Sigmoid colon (tissue), 7 donors: ENCODE measurements at regions of chr19 and their contacts with region 1.

Region 1: GRCh38 chr19:41449079-41449864 is 6.3 kb downstream of the ERICH4 start:
- DNase-seq: peak; percentile 86
- H3K4me3 ChIP-seq: peak overlapping the region in 3 of 4 donors; percentile 5 to 33 (median 22)
- H3K27ac ChIP-seq: no peak overlapping the region
- H3K4me1 ChIP-seq: peaks cover 0 to 6% (median 0%) of the 10 kb centered on the region in 4 donors
- H3K27me3 ChIP-seq: peaks cover 0 to 19% (median 0%) of the 10 kb centered on the region in 3 donors
- CTCF ChIP-seq: peak; percentile 79 to 97 (median 92)
- EP300 ChIP-seq: no peak
- POLR2A ChIP-seq: no peak

Region 2: DNA sequence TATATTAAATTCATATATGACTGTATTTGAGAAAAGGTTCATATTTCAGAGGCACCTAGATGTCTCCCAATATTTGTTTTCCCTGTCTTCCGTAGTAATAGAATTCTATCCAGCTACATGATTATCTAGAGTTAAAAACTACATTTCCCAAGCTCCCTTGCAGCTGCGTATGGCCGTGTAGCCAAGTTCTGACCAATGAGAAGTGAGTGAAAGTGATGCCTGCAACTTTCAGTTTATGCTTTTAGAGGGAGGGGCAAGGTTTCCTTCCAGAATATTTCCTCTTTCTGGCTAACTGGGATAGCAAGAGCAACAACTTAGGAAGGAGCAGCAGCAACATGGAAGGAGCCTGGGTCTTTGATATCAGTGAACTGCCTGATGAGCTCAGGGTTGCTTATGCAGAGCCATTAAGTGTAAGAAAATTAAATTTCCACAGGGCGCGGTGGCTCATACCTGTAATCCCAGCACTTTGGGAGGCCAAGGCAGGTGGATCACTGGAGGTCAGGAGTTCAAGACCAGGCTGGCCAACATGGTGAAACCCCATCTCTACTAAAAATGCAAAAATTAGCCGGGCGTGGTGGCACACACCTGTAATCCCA is 384.2 kb before region 1 on chr19:
- intact Hi-C with region 1: no loop called
- DNase-seq: no peak
- H3K4me3 ChIP-seq: no peak overlapping the region
- H3K27ac ChIP-seq: no peak overlapping the region
- H3K4me1 ChIP-seq: no peaks in the 10 kb centered on the region
- H3K27me3 ChIP-seq: peaks cover 0 to 9% (median 0%) of the 10 kb centered on the region in 3 donors
- CTCF ChIP-seq: no peak
- EP300 ChIP-seq: no peak
- POLR2A ChIP-seq: no peak

Region 3: GRCh38 chr19:41426952-41427646 is 22.2 kb before region 1 on chr19 and contains the start of gene B3GNT8:
- intact Hi-C with region 1: no loop called
- DNase-seq: peak; percentile 94
- H3K4me3 ChIP-seq: peak within 1 kb of the TSS; percentile 36 to 63 (median 56)
- H3K27ac ChIP-seq: peak within 1 kb of the TSS; percentile 82 to 89 (median 86)
- H3K4me1 ChIP-seq: peaks cover 0 to 40% (median 34%) of the 10 kb centered on the region in 4 donors
- H3K27me3 ChIP-seq: no peaks in the 10 kb centered on the region
- CTCF ChIP-seq: no peak
- EP300 ChIP-seq: no peak
- POLR2A ChIP-seq: peak; percentile 42 to 90
- total RNA-seq, gene B3GNT8: 2.8 to 8.0 (median 5.0) TPM

Region 4: DNA sequence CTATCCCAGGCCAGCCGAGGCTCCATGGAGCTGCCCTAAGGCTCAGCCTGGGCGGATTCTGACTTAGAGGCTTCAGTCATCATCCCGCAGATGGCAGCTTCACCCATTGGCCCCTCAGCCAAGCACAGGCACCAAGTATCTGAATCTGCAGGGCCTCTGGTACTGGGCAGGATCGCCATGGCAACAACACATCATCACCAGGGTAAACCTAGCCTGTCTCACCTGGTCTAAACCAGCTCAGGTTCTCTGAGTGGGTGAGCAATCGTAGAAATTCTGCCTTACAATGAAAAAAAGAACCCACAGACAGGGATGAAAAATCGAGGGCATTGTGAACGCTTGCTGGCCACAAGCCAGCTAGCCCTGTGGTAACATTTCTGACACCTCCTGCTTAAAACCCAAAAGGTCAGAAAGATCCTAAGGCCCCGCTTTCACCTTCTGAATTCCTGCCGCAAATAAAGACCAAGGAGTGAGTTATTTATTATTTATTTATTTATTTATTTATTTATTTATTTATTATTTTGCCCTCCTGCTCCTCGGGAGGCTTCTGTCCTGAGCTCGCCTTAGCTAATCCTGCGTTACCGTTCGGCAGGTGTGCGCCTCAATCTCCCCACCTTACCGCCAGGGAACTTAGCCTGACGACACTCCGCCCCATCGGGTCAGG is 114.7 kb after region 1 on chr19:
- intact Hi-C with region 1: loop called (anchors 2 kb)
- DNase-seq: no peak
- H3K4me3 ChIP-seq: no peak overlapping the region
- H3K27ac ChIP-seq: no peak overlapping the region
- H3K4me1 ChIP-seq: peaks cover 0 to 9% (median 0%) of the 10 kb centered on the region in 4 donors
- H3K27me3 ChIP-seq: peaks cover 19 to 71% (median 44%) of the 10 kb centered on the region in 3 donors
- CTCF ChIP-seq: no peak
- EP300 ChIP-seq: no peak
- POLR2A ChIP-seq: no peak

Region 5: DNA sequence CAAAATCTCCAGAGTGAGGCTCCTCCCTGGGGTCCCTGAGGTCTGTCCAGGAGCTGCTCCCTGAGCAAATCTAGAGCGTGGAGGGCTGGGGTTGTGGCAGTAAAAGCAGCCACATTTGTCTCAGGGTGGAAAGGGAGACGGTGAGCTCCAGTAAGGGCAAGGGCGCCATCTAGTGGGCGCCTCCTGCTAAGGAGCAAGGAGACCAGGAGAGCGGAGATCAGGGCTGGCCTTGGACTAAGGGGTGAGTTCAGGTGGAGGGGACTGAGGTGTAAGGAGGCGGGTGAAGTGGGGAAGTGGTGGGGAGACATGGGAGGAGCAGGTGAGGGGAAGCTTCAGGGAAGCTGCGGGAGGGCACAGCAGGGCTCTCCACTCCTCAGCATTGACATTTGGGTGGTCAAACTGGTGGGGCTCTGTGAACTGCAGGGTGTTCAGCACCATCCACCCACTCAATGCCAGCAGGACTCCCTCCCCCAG is 121.4 kb after region 1 on chr19:
- intact Hi-C with region 1: loop called (anchors 1 kb)
- DNase-seq: peak; percentile 78
- H3K4me3 ChIP-seq: no peak overlapping the region
- H3K27ac ChIP-seq: no peak overlapping the region
- H3K4me1 ChIP-seq: no peaks in the 10 kb centered on the region
- H3K27me3 ChIP-seq: peaks cover 3 to 55% (median 21%) of the 10 kb centered on the region in 3 donors
- CTCF ChIP-seq: peak; percentile 64 to 80 (median 68)
- EP300 ChIP-seq: no peak
- POLR2A ChIP-seq: no peak